WTC11 (cell line): ENCODE measurements at regions of chr3 and their contacts with region 1.

Region 1: DNA sequence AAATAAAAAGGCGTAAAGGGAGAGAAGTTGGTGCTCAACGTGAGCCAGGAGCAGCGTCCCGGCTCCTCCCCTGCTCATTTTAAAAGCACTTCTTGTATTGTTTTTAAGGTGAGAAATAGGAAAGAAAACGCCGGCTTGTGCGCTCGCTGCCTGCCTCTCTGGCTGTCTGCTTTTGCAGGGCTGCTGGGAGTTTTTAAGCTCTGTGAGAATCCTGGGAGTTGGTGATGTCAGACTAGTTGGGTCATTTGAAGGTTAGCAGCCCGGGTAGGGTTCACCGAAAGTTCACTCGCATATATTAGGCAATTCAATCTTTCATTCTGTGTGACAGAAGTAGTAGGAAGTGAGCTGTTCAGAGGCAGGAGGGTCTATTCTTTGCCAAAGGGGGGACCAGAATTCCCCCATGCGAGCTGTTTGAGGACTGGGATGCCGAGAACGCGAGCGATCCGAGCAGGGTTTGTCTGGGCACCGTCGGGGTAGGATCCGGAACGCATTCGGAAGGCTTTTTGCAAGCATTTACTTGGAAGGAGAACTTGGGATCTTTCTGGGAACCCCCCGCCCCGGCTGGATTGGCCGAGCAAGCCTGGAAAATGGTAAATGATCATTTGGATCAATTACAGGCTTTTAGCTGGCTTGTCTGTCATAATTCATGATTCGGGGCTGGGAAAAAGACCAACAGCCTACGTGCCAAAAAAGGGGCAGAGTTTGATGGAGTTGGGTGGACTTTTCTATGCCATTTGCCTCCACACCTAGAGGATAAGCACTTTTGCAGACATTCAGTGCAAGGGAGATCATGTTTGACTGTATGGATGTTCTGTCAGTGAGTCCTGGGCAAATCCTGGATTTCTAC is at the start of gene RARB:
- DNase-seq: peak; percentile 35
- ATAC-seq: peak; percentile 78
- H3K4me3 Mint-ChIP-seq: peak within 1 kb of the TSS; percentile 77
- H3K27ac Mint-ChIP-seq: no peak within 1 kb of the TSS
- H3K4me1 Mint-ChIP-seq: peaks cover 67% of the 10 kb centered on the region
- H3K27me3 Mint-ChIP-seq: peaks cover 31% of the 10 kb centered on the region
- CTCF ChIP-seq: no peak
- total RNA-seq, gene RARB: 0.14 TPM in 1 of 3 replicates, not detected in the others

Region 2: DNA sequence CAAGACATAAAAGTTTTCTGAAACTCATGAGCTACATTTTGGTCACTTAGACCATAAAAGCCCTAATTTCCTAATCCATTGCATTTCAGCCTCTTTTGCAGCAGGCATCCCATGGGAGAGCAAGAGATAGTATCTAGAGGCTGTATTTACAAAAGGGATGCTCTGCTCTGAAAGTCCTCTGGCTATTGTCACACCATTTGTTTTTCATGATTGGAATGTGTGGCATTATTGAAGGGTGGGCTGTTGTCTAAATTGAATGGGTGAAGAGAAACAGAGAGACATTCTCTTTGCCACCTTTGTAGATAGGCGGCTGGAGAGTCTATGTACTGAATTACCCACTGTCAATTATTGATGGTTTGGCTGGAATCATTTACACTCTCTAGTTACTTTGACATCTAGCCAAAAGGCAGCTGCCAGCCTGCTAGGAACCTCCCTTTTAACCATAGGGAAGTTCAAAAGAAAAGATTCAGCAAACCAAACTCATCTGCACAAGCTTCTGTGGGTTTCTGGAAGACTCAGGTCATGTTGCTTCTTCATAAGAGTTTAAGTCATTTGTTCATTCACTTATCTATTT is 89.9 kb before region 1 on chr3:
- CTCF ChIA-PET with region 1: no interaction called
- POLR2A ChIA-PET with region 1: no interaction called
- DNase-seq: no peak
- ATAC-seq: no peak
- H3K4me3 Mint-ChIP-seq: no peak overlapping the region
- H3K27ac Mint-ChIP-seq: no peak overlapping the region
- H3K4me1 Mint-ChIP-seq: peaks cover 11% of the 10 kb centered on the region
- H3K27me3 Mint-ChIP-seq: no peaks in the 10 kb centered on the region
- CTCF ChIP-seq: no peak

Region 3: DNA sequence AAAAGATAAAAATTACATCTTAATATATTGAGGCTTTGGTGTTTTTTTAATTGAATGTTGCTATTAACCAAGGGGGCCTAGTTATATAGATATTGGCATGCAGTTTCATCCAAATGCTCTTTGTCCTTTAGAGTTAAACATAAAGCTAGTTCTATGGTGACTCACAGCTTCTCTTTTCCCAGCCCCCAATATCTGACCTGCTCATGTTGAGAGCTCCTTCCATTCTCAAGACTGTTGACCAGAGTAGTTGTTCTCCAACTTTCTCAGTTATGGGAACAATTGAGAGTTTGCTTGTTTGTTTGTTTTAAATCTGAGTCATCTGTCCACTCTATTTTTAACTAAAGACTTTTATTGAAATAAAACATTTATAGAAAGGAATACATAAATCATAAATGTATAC is 15.9 kb before region 1 on chr3:
- CTCF ChIA-PET with region 1: no interaction called
- POLR2A ChIA-PET with region 1: no interaction called
- DNase-seq: no peak
- ATAC-seq: no peak
- H3K4me3 Mint-ChIP-seq: no peak overlapping the region
- H3K27ac Mint-ChIP-seq: no peak overlapping the region
- H3K4me1 Mint-ChIP-seq: 0 out of 2 replicates have a peak, but pooled peaks cover 4% of the 10 kb centered on the region
- H3K27me3 Mint-ChIP-seq: no peaks in the 10 kb centered on the region
- CTCF ChIP-seq: no peak

Region 4: GRCh38 chr3:25441234-25441856 is 13.2 kb after region 1 on chr3:
- CTCF ChIA-PET with region 1: interaction called, 12 read pairs
- POLR2A ChIA-PET with region 1: interaction called, 3 read pairs
- DNase-seq: peak; percentile 68
- ATAC-seq: no peak
- H3K4me3 Mint-ChIP-seq: no peak overlapping the region
- H3K27ac Mint-ChIP-seq: no peak overlapping the region
- H3K4me1 Mint-ChIP-seq: peaks cover 10% of the 10 kb centered on the region
- H3K27me3 Mint-ChIP-seq: peaks cover 6% of the 10 kb centered on the region; the same call in 1 of the 2 replicates
- CTCF ChIP-seq: peak; percentile 90

Region 5: DNA sequence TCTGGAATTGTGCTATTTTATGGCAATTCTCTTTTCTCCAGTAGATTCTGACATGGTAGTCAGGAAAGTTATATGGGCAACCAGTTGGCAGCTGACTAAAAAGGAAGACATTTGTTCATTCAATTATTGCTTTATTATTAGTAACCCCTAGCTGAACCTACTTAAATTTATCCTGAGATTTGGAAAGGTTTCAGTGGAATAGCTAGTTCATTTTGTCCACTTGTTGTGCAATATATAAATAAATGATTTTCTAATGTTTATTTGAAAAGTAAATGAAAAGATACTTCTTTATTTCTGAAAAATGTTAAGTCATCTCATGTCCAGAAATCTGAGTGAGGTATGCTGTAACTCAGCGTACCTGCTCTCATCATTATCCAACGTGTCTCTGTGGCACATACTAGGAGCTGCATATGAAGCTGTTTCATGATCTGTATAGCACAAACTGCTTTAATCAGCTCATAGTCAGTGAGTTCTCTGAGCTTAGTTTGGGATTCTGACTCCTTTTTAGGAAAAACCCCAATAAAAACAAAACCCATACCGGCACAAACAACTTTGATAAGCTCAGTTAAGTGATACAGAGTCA is 35.8 kb after region 1 on chr3:
- CTCF ChIA-PET with region 1: no interaction called
- POLR2A ChIA-PET with region 1: no interaction called
- DNase-seq: no peak
- ATAC-seq: no peak
- H3K4me3 Mint-ChIP-seq: no peak overlapping the region
- H3K27ac Mint-ChIP-seq: no peak overlapping the region
- H3K4me1 Mint-ChIP-seq: no peaks in the 10 kb centered on the region
- H3K27me3 Mint-ChIP-seq: no peaks in the 10 kb centered on the region
- CTCF ChIP-seq: no peak

Region 6: GRCh38 chr3:25678581-25678980 is 250.4 kb after region 1 on chr3:
- CTCF ChIA-PET with region 1: no interaction called
- POLR2A ChIA-PET with region 1: no interaction called
- DNase-seq: no peak
- ATAC-seq: no peak
- H3K4me3 Mint-ChIP-seq: no peak overlapping the region
- H3K27ac Mint-ChIP-seq: no peak overlapping the region
- H3K4me1 Mint-ChIP-seq: 0 out of 2 replicates have a peak, but pooled peaks cover 4% of the 10 kb centered on the region
- H3K27me3 Mint-ChIP-seq: no peaks in the 10 kb centered on the region
- CTCF ChIP-seq: no peak